Right lobe of liver (tissue), 6 donors: ENCODE measurements at regions of chr5 and their contacts with region 1.

Region 1: GRCh38 chr5:54249210-54250028 is 61.0 kb downstream of the ARL15 start:
- DNase-seq: peak in 1 of 3 donors; percentile 26
- ATAC-seq: no peak
- H3K4me3 ChIP-seq: no peak overlapping the region
- H3K27ac ChIP-seq: no peak overlapping the region
- H3K4me1 ChIP-seq: no peaks in the 10 kb centered on the region
- H3K27me3 ChIP-seq: no peaks in the 10 kb centered on the region
- CTCF ChIP-seq: no peak
- POLR2A ChIP-seq: no peak

Region 2: GRCh38 chr5:54180616-54181015 is 68.8 kb before region 1 on chr5:
- intact Hi-C with region 1: no loop called
- DNase-seq: no peak
- ATAC-seq: no peak
- H3K4me3 ChIP-seq: no peak overlapping the region
- H3K27ac ChIP-seq: no peak overlapping the region
- H3K4me1 ChIP-seq: no peaks in the 10 kb centered on the region
- H3K27me3 ChIP-seq: no peaks in the 10 kb centered on the region
- CTCF ChIP-seq: no peak
- POLR2A ChIP-seq: no peak

Region 3: DNA sequence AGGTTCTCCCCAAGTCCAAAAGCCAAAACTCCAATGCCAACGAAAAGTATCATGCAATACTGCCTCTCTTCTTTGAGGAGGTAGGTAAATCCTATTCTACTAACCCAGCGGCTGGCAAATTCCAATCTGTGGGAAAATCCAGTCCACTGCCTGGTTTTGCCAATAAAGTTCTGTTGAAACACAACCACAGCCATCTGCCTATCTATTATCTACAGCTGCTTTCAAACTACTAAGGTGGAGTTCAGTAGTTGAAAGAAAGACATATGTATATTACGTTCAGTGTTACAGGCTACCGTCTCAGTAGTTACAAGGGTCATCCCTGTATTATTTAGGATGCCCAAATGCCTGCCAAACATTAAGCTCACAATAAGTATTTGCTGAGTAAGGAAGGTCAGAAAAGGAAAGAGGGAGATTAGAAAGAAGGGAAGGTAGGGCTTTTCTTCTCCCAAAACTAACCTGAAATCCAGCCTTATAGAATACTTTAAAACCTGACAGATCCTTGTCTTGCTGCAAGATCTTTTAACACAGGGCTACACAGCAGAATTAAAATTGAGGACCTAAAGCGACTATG is 44.8 kb after region 1 on chr5:
- intact Hi-C with region 1: no loop called
- DNase-seq: no peak
- ATAC-seq: no peak
- H3K4me3 ChIP-seq: no peak overlapping the region
- H3K27ac ChIP-seq: no peak overlapping the region
- H3K4me1 ChIP-seq: peaks cover 0 to 9% (median 4%) of the 10 kb centered on the region in 4 donors
- H3K27me3 ChIP-seq: no peaks in the 10 kb centered on the region
- CTCF ChIP-seq: no peak
- POLR2A ChIP-seq: no peak

Region 4: GRCh38 chr5:54309691-54310432 is 60.4 kb after region 1 on chr5:
- intact Hi-C with region 1: loop called in 1 of 2 experiments (anchors 10 kb)
- DNase-seq: peak; percentile 57 to 70 (median 63)
- ATAC-seq: peak; percentile 44 to 60 (median 54)
- H3K4me3 ChIP-seq: peak overlapping the region; percentile 86 to 92 (median 87)
- H3K27ac ChIP-seq: peak overlapping the region; percentile 79 to 88 (median 84)
- H3K4me1 ChIP-seq: peaks cover 0 to 24% (median 5%) of the 10 kb centered on the region in 4 donors
- H3K27me3 ChIP-seq: no peaks in the 10 kb centered on the region
- CTCF ChIP-seq: no peak
- POLR2A ChIP-seq: no peak

Region 5: DNA sequence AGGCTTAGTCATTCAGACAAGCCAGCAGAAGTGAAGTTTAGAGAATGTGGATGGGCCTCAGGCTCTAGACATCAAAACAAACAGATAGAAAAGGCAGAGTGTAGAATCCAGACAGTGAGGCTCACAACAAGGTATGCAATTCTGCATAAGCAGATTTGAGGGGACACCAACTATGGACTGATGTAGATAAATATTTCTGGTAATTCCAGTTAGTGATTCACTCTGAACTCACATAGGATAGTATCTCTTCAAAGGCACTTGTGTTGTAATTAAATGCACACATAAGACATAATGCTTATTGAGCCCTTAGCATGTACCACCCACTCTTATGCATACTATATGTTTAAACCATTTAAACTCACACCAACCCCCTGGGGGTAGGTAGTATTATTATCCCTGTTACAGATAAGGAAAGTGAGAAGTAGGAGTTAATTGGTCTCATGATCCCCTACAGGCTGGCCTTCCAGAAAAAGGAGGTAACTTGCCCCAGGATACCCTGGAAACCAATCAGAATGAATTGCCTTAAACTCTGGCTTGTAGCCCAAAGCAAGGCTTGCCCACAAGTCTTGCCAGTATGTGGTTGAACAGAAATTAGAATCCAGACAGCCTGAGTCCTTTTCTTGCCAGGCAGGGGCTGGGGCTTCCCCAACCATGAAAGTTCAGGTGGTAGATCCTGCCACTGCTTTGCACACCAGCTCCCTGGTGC is 166.6 kb after region 1 on chr5:
- intact Hi-C with region 1: loop called (anchors 10 kb)
- DNase-seq: no peak
- ATAC-seq: no peak
- H3K4me3 ChIP-seq: no peak overlapping the region
- H3K27ac ChIP-seq: no peak overlapping the region
- H3K4me1 ChIP-seq: no peaks in the 10 kb centered on the region
- H3K27me3 ChIP-seq: no peaks in the 10 kb centered on the region
- CTCF ChIP-seq: no peak
- POLR2A ChIP-seq: no peak